ENCODE measurements at regions of chr6 and their contacts with region 1.

Region 1: GRCh38 chr6:24855395-24856245 is 56.9 kb upstream of the ARMH2 start:
- DNase-seq: peak; percentile 58
- ATAC-seq: peak; percentile 85
- H3K4me3 ChIP-seq: no peak overlapping the region
- H3K27ac ChIP-seq: no peak overlapping the region
- H3K4me1 ChIP-seq: peaks cover 32% of the 10 kb centered on the region
- H3K27me3 ChIP-seq: no peaks in the 10 kb centered on the region
- CTCF ChIP-seq: peak; percentile 78 to 90 (median 87)
- EP300 ChIP-seq: no peak
- POLR2A ChIP-seq: no peak
- RAD21 ChIP-seq: peak; percentile 98

Region 2: DNA sequence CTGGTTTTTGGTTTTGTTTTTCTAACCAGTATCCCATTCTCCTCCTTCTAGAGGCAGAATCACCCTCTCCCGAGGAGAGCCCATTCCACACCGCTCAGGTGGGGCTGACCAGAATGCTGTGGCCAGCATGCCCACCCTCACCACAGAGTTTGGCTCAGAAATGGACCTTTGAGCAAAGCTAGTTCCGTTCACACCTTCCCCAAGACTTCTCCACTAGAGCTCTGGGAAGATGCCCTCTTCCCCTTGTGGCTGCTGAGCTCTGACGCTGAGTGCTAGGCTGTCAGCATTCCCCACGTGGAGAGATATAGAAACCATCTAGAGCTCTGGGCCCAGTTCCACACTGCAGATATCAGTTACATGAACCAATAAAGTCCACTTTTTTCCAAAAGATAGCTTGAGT is 374.2 kb before region 1 on chr6:
- CTCF ChIA-PET with region 1: no interaction called
- POLR2A ChIA-PET with region 1: no interaction called
- RAD21 ChIA-PET with region 1: no interaction called
- SMC1A ChIA-PET with region 1: no interaction called
- in situ Hi-C with region 1: no loop called
- intact Hi-C with region 1: no loop called
- DNase-seq: no peak
- ATAC-seq: no peak
- H3K4me3 ChIP-seq: no peak overlapping the region
- H3K27ac ChIP-seq: no peak overlapping the region
- H3K4me1 ChIP-seq: no peaks in the 10 kb centered on the region
- H3K27me3 ChIP-seq: no peaks in the 10 kb centered on the region
- CTCF ChIP-seq: no peak
- EP300 ChIP-seq: no peak
- POLR2A ChIP-seq: no peak
- RAD21 ChIP-seq: no peak

Region 3: DNA sequence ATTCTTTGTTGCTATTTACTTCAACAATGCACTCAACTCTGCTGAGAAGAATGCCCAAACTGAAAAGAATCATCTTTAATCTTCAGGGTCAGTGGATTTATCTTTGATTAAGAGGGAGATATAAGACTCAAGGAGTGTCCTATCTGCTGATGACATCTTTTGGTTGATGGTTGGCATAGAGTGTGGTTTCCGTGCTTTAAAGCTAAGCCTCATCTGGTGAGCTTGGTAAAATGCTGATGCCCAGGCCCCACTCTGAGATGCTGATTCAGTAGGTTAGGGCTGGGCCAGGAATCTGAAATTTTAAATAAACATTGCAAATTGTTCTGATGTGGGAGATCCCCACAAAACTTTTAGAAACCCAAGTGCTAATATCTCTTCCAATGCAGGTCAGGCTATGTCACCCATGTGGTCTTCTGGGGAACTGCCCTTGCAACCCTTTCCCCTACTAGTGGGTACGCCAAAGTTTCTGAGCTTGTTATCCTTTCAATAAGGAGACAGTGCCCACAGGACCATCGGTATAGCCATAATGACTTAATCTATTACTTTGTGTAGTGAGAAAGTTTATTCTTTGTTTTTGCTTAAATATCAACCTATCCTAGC is 11.6 kb after region 1 on chr6:
- CTCF ChIA-PET with region 1: interaction called, 14 read pairs
- POLR2A ChIA-PET with region 1: no interaction called
- RAD21 ChIA-PET with region 1: interaction called, 11 read pairs
- SMC1A ChIA-PET with region 1: interaction called, 7 read pairs
- in situ Hi-C with region 1: no loop called
- intact Hi-C with region 1: no loop called
- DNase-seq: no peak
- ATAC-seq: no peak
- H3K4me3 ChIP-seq: no peak overlapping the region
- H3K27ac ChIP-seq: no peak overlapping the region
- H3K4me1 ChIP-seq: peaks cover 3% of the 10 kb centered on the region
- H3K27me3 ChIP-seq: no peaks in the 10 kb centered on the region
- CTCF ChIP-seq: peak in 1 of 3 experiments; percentile 8; a peak in 1 of 6 replicates
- EP300 ChIP-seq: no peak
- POLR2A ChIP-seq: no peak
- RAD21 ChIP-seq: no peak

Region 4: GRCh38 chr6:24924580-24925356 is 69.1 kb after region 1 on chr6:
- CTCF ChIA-PET with region 1: interaction called, 10 read pairs
- POLR2A ChIA-PET with region 1: interaction called, 3 read pairs
- RAD21 ChIA-PET with region 1: interaction called, 5 read pairs
- SMC1A ChIA-PET with region 1: interaction called, 4 read pairs
- in situ Hi-C with region 1: no loop called
- intact Hi-C with region 1: no loop called
- DNase-seq: no peak
- ATAC-seq: 0 out of 3 replicates have a peak, but pooled peaks have one; percentile 9
- H3K4me3 ChIP-seq: no peak overlapping the region
- H3K27ac ChIP-seq: no peak overlapping the region
- H3K4me1 ChIP-seq: peaks cover 42% of the 10 kb centered on the region
- H3K27me3 ChIP-seq: no peaks in the 10 kb centered on the region
- CTCF ChIP-seq: no peak
- EP300 ChIP-seq: no peak
- POLR2A ChIP-seq: no peak
- RAD21 ChIP-seq: no peak

Region 5: DNA sequence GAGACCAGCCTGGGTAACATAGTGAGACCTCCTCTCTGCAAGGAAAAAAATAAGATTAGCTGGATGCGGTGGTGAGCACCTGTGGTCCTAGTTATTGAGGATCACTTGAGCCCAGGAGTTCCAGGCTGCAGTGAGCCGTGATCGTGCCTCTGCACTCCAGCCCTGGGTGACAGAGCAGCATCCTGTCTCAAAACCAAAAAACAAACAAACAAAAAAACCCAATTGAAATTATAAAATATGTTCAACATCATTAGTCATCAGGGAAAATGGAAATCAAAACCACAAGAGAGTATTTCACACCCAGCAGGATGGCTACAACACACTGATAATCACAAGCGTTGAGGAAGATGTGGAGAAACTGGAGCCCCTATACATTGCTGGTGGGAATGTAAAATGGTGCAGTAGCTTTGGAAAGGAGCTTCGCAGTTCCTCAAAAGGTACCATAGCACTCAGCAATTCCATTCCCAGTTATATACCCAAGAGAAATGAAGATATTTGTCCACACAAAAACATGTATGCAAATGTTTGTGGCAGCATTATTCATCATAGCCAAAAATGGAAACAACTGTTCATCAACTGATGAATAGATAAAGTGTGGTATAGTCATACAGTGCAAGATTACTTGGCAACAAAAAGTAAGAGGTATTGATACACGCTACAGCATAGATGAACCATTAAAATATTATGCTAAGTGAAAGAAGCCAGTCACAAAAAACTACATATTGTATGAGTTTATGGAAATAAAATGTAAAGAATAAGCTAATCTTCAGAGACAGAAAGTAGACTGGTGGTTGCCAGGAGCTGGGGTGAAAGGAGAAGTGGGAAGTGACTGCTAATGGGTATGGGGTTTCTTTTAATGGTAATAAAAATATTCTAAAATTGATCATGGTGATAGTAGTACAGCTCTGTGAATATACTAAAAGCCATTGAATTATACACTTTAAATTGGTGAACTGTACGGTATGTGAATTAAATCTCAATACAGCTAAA is 118.9 kb after region 1 on chr6:
- CTCF ChIA-PET with region 1: interaction called, 16 read pairs
- POLR2A ChIA-PET with region 1: no interaction called
- RAD21 ChIA-PET with region 1: interaction called, 3 read pairs
- SMC1A ChIA-PET with region 1: interaction called, 3 read pairs
- in situ Hi-C with region 1: no loop called
- intact Hi-C with region 1: no loop called
- DNase-seq: no peak
- ATAC-seq: peak; percentile 95
- H3K4me3 ChIP-seq: no peak overlapping the region
- H3K27ac ChIP-seq: no peak overlapping the region
- H3K4me1 ChIP-seq: peaks cover 10% of the 10 kb centered on the region
- H3K27me3 ChIP-seq: no peaks in the 10 kb centered on the region
- CTCF ChIP-seq: no peak
- EP300 ChIP-seq: no peak; a peak in 1 of 4 replicates
- POLR2A ChIP-seq: no peak
- RAD21 ChIP-seq: no peak

Region 6: DNA sequence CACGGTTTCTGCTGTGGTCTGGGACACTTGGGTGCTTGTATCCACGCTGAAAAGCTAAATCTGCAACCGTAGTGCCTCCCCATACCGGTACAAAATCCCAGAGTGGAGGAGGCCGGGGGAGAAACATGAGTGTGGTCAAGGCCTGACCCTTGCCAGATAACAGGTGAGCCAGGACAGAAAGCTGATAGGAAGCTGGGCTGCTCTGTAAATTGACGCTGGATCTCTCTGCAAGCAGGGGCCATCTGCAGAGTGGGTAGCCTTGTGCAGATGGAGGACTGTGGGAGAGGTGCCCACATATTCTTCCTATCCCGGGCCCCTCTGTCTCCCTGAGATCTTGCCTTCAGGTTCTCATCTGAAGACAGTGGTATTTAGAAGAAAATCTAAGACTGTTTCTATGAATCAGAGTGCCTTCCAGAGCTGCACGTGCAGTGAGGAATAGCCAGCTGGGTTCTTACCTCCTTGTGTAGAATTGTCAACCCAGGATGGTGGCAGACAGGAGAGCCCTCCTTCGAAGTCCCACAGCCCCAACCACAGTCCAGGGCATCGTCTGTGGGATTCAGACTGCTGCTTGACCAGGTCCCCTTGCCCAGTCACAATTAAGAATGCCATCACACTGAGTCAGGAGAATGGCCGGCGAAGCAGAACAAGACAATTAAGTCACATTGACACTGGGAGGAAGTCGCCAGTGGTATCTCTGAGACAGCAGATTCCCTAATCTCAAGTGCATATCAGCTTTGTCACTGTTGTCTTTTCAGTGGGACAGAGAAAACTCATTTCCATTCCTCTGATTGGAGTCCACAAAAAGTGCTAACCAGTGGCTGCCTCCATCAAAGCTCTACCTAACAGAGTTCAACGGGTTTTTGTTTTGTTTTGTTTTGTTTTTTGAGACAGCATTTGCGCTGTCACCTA is 180.2 kb after region 1 on chr6:
- CTCF ChIA-PET with region 1: interaction called, 24 read pairs
- POLR2A ChIA-PET with region 1: no interaction called
- RAD21 ChIA-PET with region 1: no interaction called
- SMC1A ChIA-PET with region 1: interaction called, 4 read pairs
- in situ Hi-C with region 1: no loop called
- intact Hi-C with region 1: no loop called
- DNase-seq: no peak
- ATAC-seq: peak; percentile 71
- H3K4me3 ChIP-seq: peak overlapping the region; percentile 52; the same call in 1 of the 2 replicates
- H3K27ac ChIP-seq: peak overlapping the region; percentile 80
- H3K4me1 ChIP-seq: peaks cover 19% of the 10 kb centered on the region
- H3K27me3 ChIP-seq: no peaks in the 10 kb centered on the region
- CTCF ChIP-seq: no peak
- EP300 ChIP-seq: no peak
- POLR2A ChIP-seq: no peak
- RAD21 ChIP-seq: no peak